PC-9 (cell line): ENCODE measurements at regions of chr15 and their contacts with region 1.

Region 1: DNA sequence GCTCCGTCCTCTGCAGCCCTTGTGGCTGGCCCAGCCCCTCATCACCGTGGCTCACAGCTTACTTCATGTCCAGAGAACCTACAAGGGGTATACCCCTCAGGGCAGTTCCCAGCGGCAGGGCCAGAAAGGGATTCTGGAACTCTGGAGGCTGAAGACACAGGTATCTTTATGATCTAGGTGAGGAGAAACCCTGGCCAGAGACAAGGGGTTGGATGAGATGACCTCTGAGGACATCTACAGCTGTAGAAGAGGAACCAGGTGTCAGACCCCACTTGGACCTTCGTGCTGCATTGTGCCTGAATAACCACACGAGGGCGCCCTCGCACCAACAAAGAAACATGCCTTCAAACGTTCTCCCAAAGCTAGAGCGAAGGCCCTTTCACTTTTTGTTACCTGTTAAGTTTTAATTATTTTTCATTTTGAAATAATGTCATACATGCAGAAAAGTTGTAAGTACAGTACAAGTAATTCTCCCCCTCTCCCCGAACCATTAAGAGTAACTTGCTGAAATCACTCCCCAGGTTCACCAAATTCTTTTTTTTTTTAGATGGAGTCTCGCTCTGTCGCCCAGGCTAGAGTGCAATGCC is 118.7 kb upstream of the SMAD3 start:
- DNase-seq: peak; percentile 44 to 72
- H3K4me3 ChIP-seq: no peak overlapping the region
- H3K27ac ChIP-seq: no peak overlapping the region
- H3K4me1 ChIP-seq: peaks cover 17% of the 10 kb centered on the region
- H3K27me3 ChIP-seq: no peaks in the 10 kb centered on the region
- CTCF ChIP-seq: peak; percentile 89

Region 2: DNA sequence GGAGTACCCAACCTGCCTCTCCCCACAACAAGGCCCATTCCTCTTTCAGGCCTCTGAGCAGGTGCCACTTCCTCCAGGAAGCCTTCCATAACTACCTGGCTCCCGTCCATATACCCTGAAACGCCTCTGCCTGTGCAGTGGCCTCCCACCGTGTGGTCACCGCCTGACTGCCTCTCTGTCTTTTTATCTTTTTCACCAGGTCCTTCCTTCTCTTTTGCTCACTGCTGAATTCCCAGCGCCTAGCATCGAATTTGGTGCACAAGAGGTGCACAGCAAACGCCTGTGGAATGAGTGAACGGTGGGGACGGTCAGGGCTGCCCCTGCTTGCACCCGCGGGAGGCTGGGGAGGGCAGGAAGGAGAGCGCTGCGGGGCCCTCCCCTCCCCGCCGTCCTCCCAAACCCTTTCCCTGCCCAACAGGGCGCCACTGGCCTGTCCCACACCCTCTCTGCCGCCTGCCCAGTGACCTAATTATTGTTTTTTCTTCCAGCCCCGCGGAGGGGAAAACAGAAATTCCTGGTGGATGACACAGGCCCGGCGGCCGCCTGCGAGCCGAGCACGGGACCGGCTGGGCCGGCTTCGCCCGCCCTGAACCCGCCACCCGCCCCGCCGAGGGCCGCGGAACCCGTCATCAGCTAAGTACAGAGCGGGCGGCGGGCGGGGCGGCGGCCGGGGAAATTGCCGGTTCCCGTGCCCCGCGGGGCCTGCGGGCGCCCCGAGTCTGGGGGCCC is 104.6 kb before region 1 on chr15:
- CTCF ChIA-PET with region 1: interaction called, 10 read pairs
- POLR2A ChIA-PET with region 1: no interaction called
- intact Hi-C with region 1: no loop called
- DNase-seq: peak; percentile 77 to 92
- H3K4me3 ChIP-seq: peak overlapping the region; percentile 46; the same call in 1 of the 2 replicates
- H3K27ac ChIP-seq: peak overlapping the region; percentile 81
- H3K4me1 ChIP-seq: peaks cover 29% of the 10 kb centered on the region
- H3K27me3 ChIP-seq: no peaks in the 10 kb centered on the region
- CTCF ChIP-seq: no peak

Region 3: GRCh38 chr15:67048281-67049279 is 101.9 kb after region 1 on chr15:
- CTCF ChIA-PET with region 1: no interaction called
- POLR2A ChIA-PET with region 1: no interaction called
- intact Hi-C with region 1: loop called (anchors 1 kb)
- DNase-seq: peak; percentile 73 to 93
- H3K4me3 ChIP-seq: no peak overlapping the region
- H3K27ac ChIP-seq: peak overlapping the region; percentile 98
- H3K4me1 ChIP-seq: peaks cover 44% of the 10 kb centered on the region
- H3K27me3 ChIP-seq: no peaks in the 10 kb centered on the region
- CTCF ChIP-seq: no peak

Region 4: GRCh38 chr15:67120839-67121643 is 174.4 kb after region 1 on chr15:
- CTCF ChIA-PET with region 1: interaction called, 3 read pairs
- POLR2A ChIA-PET with region 1: no interaction called
- intact Hi-C with region 1: loop called (anchors 5 kb)
- DNase-seq: peak in 1 of 2 experiments; percentile 56
- H3K4me3 ChIP-seq: no peak overlapping the region
- H3K27ac ChIP-seq: peak overlapping the region; percentile 98; the same call in 1 of the 2 replicates
- H3K4me1 ChIP-seq: peaks cover 76% of the 10 kb centered on the region
- H3K27me3 ChIP-seq: no peaks in the 10 kb centered on the region
- CTCF ChIP-seq: no peak

Region 5: DNA sequence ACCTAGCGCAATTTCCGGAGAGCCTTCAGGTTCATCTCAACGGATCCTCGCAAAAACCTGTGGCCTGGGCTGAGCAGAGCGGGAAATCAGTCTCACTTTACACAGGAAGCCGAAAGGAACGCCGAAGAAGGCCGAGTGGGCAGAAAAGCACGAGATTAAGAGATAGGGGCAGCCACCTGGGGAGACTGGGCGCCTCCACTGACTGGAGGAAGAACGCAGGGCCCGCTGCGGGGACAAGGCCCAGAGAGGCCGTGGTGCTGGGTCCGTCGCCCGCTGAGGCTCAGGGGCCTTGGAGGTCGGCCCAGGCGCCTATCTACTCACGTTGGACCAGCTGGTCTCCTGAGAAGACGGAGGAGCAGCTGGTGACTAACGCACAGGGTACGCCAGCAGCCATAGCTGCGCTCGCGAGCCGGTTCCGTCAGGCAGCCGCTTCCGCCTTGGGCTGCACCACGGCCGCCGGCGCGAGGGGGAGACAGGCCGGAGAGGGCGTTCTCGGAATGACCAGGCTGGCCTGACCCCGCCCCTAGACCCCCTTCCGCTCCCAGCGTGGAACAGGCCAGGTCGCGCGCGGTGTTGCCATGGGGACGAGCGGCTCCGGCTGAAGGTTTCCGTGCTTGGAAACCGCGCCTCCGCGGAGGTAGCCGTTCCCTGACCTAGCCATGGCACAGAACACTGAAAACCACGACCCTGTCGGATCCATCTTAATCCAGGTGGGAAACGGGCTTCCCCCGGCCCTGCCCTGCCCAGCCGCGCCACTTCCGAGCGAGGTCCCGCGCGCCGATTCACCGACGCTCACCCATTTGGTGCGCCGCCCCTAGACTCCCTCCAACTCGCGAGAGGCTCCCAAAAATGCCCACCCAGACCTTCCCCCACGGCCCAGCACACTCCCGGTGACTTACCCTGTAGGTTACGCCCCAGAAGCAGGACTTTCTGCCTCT is 307.8 kb after region 1 on chr15 and contains the starts of genes AAGAB and IQCH:
- CTCF ChIA-PET with region 1: no interaction called
- POLR2A ChIA-PET with region 1: no interaction called
- intact Hi-C with region 1: loop called (anchors 5 kb)
- DNase-seq: peak; percentile 88 to 99
- H3K4me3 ChIP-seq: peak within 1 kb of the TSS; percentile 99
- H3K27ac ChIP-seq: peak within 1 kb of the TSS; percentile 86
- H3K4me1 ChIP-seq: peaks cover 14% of the 10 kb centered on the region
- H3K27me3 ChIP-seq: no peaks in the 10 kb centered on the region
- CTCF ChIP-seq: no peak
- total RNA-seq, gene AAGAB: 42.2 and 56.5 TPM in 2 replicates
- total RNA-seq, gene IQCH: 7.5 and 8.6 TPM in 2 replicates

Region 6: DNA sequence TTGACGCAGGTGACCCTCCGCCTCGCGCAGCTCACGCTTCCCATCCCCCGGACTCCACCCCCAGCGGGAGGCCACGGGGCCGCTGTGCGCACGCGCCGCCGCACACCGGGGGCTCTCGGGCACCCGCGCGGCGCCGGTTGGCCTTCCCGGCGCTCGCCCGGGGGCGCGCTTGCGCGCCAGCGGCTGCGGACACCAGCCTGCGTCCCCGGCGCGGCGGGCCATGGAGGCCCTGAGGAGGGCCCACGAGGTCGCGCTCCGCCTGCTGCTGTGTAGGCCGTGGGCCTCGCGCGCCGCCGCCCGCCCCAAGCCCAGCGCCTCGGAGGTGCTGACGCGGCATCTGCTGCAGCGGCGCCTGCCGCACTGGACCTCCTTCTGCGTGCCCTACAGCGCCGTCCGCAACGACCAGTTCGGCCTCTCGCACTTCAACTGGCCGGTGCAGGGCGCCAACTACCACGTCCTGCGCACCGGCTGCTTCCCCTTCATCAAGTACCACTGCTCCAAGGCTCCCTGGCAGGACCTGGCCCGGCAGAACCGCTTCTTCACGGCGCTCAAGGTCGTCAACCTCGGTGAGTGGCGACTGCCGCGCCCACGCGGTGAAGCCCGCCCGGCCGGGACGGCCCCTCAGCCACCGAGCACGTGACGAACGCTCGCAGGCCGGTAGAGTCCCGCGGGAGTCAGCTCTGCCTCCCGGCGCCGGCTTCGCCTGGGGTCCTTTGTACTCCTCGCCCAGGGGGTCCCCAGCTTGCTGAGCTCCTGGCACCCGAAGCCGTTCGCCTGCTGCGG is 574.5 kb after region 1 on chr15 and contains the start of gene C15orf61:
- CTCF ChIA-PET with region 1: no interaction called
- POLR2A ChIA-PET with region 1: interaction called, 15 read pairs
- intact Hi-C with region 1: no loop called
- DNase-seq: peak; percentile 69 to 95
- H3K4me3 ChIP-seq: peak within 1 kb of the TSS; percentile 83
- H3K27ac ChIP-seq: peak within 1 kb of the TSS; percentile 85
- H3K4me1 ChIP-seq: peaks cover 17% of the 10 kb centered on the region
- H3K27me3 ChIP-seq: no peaks in the 10 kb centered on the region
- CTCF ChIP-seq: no peak
- total RNA-seq, gene C15orf61: 6.5 and 6.8 TPM in 2 replicates